GM10248 (cell line): ENCODE measurements at regions of chr16 and their contacts with region 1.

Region 1: DNA sequence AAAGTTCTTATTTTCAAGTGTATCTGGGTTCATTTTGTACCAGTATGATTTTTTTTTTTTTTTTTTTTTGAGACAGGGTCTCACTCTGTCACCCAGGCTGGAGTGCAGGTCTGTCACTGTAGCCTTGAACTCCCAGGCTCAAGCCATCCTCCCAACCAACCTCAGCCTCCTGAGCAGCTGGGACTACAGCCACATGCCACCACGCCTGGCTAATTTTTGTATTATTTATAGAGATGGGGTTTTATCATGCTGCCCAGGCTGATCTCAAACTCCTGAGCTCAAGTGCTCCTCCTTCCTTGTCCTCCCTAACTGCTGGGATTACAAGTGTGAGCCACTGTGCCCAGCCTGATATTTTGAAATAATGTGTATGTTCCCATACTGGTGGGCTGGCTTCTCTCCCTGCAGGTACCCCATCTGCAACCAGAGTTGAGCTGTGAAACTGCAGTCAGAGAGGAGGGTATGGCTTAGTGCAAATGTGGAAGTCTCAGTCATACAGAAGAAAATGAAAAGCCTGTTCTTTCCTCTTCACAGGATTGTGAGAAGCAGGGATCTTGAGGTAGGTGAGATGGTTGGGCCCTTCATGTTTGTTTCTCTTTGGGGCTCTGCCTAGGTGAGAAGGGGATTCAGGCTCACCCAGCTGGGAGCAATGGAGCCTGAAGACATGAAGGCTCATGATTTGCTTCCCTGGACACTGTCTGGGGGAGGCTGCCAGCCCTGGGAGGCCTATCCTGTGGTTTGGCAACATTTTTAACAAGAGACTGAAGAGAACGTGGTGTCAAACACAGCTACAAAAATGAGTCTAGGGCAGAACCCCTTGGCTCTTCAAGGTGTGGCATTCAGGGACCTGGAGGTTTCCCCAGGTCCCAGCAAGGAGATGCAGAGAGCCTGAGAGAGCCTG is 41.3 kb upstream of the SIAH1 start:
- DNase-seq: no peak
- CTCF ChIP-seq: no peak

Region 2: DNA sequence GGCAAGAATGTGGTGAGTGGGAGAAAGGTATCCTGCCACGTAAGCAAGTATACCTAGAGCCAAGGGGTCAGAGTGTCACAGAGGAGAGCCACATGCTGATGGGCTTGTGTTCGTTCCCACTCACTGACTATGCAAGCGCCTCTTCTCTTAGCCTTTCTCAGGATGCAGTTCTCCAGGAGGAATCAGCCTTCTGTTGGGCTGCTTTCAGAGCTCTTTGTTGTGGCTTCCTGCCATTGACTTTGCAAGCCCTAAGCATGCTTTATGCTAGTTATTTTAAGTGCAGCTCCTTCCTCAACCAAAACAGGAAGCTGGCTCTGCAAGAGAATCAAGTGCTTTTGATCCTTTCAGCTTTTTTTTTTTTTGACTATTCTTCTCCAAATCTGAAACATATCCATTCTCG is 107.9 kb before region 1 on chr16:
- CTCF ChIA-PET with region 1: no interaction called
- POLR2A ChIA-PET with region 1: no interaction called
- DNase-seq: no peak
- CTCF ChIP-seq: no peak

Region 3: GRCh38 chr16:48385272-48386150 is 41.0 kb before region 1 on chr16 and contains the start of gene SIAH1:
- CTCF ChIA-PET with region 1: no interaction called
- POLR2A ChIA-PET with region 1: no interaction called
- DNase-seq: peak; percentile 94
- CTCF ChIP-seq: no peak

Region 4: GRCh38 chr16:48452977-48453760 is 26.7 kb after region 1 on chr16:
- CTCF ChIA-PET with region 1: interaction called, 10 read pairs
- POLR2A ChIA-PET with region 1: no interaction called
- DNase-seq: no peak
- CTCF ChIP-seq: no peak

Region 5: GRCh38 chr16:48609652-48610029 is 183.1 kb after region 1 on chr16:
- CTCF ChIA-PET with region 1: no interaction called
- POLR2A ChIA-PET with region 1: no interaction called
- DNase-seq: no peak
- CTCF ChIP-seq: no peak